Activated CD4-positive, alpha-beta memory T cell treated with anti-CD3 and anti-CD28 coated beads for 36 hours (primary cell): ENCODE measurements at regions of chr21 and their contacts with region 1.

Region 1: GRCh38 chr21:35095859-35096291 is 46.8 kb upstream of the RUNX1 start:
- DNase-seq: peak; percentile 42
- H3K4me3 Mint-ChIP-seq: no peak overlapping the region
- H3K27ac Mint-ChIP-seq: peak overlapping the region; percentile 83
- H3K4me1 Mint-ChIP-seq: peaks cover 48% of the 10 kb centered on the region
- H3K27me3 Mint-ChIP-seq: peaks cover 2% of the 10 kb centered on the region

Region 2: DNA sequence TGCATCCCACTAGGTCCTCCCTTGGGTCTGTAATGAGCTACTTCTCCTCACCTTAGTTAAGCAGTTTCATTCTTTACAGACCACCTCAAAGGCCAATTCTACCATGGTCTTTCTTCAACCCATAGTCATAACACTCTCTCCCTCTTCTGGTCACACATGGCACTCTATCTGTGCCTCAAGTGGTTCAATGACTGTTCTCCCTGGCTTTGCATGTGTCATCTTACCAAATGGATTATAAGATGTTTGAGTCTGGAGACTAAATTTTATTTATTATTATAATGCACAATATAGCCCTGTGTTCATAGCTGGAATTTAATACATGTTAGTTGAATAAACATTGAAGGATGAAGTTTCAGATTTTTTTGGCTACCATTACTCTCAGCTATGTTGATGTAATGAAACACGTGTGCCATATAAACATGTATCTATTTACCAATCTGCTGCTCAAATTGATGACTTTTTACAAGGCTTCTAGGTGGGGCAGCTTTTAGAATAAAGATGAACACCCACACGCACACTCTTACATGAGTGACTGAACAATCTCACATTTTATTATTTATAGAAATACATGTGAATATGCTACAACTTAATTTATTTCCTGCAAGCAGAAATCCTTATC is 148.8 kb before region 1 on chr21:
- CTCF ChIA-PET with region 1: no interaction called
- POLR2A ChIA-PET with region 1: interaction called, 4 read pairs
- intact Hi-C with region 1: loop called (anchors 2 kb)
- DNase-seq: no peak
- H3K4me3 Mint-ChIP-seq: no peak overlapping the region
- H3K27ac Mint-ChIP-seq: peak overlapping the region; percentile 88
- H3K4me1 Mint-ChIP-seq: peaks cover 90% of the 10 kb centered on the region
- H3K27me3 Mint-ChIP-seq: no peaks in the 10 kb centered on the region

Region 3: GRCh38 chr21:35138665-35139381 is 42.9 kb after region 1 on chr21:
- CTCF ChIA-PET with region 1: interaction called, 3 read pairs
- POLR2A ChIA-PET with region 1: interaction called, 17 read pairs
- intact Hi-C with region 1: loop called (anchors 1 kb)
- DNase-seq: peak; percentile 79
- H3K4me3 Mint-ChIP-seq: peak overlapping the region; percentile 68
- H3K27ac Mint-ChIP-seq: peak overlapping the region; percentile 90
- H3K4me1 Mint-ChIP-seq: peaks cover 29% of the 10 kb centered on the region
- H3K27me3 Mint-ChIP-seq: no peaks in the 10 kb centered on the region

Region 4: DNA sequence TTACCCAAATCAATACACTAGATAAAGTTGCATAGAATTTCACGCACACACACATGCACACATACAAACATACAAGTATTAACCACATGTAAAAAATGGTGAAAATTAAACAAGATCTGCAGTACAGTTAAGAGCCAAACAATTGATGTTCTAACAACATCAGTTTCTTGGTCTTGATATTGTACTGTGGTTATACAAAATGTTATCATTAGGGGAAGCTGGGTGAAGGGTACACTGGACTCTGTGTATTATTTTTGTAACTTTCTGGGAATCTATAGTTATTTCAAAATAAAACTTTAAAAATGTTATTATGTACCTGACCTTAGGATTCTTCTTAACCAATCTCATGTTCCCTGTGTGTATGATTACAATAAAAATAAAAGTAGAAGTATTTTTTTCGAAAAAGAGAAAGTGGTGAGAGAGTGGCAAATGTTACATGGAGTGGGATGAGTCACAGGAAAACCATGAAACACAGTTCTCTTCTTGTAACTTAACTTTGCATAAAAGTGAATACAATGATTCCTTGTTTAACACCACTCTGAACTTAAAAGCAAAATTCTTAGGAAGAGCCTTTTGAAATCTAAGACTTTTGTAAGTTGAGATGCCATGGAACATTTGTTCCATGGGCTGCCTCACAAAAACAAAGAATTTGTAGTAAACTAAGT is 54.8 kb after region 1 on chr21:
- CTCF ChIA-PET with region 1: no interaction called
- POLR2A ChIA-PET with region 1: interaction called, 9 read pairs
- intact Hi-C with region 1: loop called (anchors 1 kb)
- DNase-seq: no peak
- H3K4me3 Mint-ChIP-seq: peak overlapping the region; percentile 6
- H3K27ac Mint-ChIP-seq: peak overlapping the region; percentile 90
- H3K4me1 Mint-ChIP-seq: peaks cover 51% of the 10 kb centered on the region
- H3K27me3 Mint-ChIP-seq: peaks cover 1% of the 10 kb centered on the region

Region 5: GRCh38 chr21:35254006-35254764 is 158.3 kb after region 1 on chr21:
- CTCF ChIA-PET with region 1: interaction called, 4 read pairs
- POLR2A ChIA-PET with region 1: interaction called, 3 read pairs
- intact Hi-C with region 1: loop called (anchors 2 kb)
- DNase-seq: no peak
- H3K4me3 Mint-ChIP-seq: no peak overlapping the region
- H3K27ac Mint-ChIP-seq: no peak overlapping the region
- H3K4me1 Mint-ChIP-seq: peaks cover 43% of the 10 kb centered on the region
- H3K27me3 Mint-ChIP-seq: no peaks in the 10 kb centered on the region

Region 6: GRCh38 chr21:35400233-35400957 is 304.5 kb after region 1 on chr21:
- CTCF ChIA-PET with region 1: interaction called, 3 read pairs
- POLR2A ChIA-PET with region 1: no interaction called
- intact Hi-C with region 1: loop called (anchors 5 kb)
- DNase-seq: peak; percentile 37
- H3K4me3 Mint-ChIP-seq: no peak overlapping the region
- H3K27ac Mint-ChIP-seq: no peak overlapping the region
- H3K4me1 Mint-ChIP-seq: peaks cover 24% of the 10 kb centered on the region
- H3K27me3 Mint-ChIP-seq: peaks cover 3% of the 10 kb centered on the region